Activated CD4-positive, alpha-beta memory T cell treated with anti-CD3 and anti-CD28 coated beads for 36 hours (primary cell): ENCODE measurements at regions of chr18 and their contacts with region 1.

Region 1: DNA sequence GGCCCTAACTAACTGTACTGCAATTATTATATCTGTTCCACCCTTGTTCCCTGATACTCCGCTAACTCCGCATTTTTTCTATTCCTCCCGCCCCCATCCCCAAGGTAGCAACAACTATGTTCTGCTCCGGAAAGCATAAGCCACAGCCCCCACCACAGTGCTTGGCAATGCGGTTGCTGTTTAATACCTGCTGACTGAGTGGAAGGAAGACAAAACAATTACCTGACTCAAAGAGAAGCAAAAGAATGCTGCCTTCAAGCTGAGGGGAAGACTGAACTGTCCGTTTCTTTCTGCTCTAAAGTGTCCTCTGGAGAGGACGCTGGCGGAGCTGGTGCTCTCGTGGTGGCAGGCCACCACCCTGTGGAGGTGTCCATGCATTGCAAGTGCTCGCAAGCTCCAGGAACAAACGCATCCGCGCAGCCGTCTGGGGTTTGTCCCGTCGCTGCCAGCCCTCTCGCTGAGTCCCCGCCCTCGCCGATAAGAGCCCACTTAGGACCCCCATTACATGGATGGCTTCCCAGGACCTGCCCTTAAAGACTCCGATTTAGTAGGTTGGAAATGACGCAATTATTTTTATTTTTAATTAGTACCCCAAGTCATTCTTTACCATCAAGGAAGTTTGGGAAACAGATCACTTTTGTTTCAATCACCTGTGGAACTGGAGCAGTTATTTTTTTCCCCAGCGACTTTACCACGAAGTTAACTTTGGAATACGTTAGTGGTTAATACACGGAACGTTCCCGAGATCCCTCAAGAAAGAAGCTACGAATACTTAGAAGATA is 1.6 kb upstream of the MYL12A start:
- DNase-seq: peak; percentile 91
- H3K4me3 Mint-ChIP-seq: peak overlapping the region; percentile 97
- H3K27ac Mint-ChIP-seq: peak overlapping the region; percentile 98
- H3K4me1 Mint-ChIP-seq: peaks cover 23% of the 10 kb centered on the region
- H3K27me3 Mint-ChIP-seq: no peaks in the 10 kb centered on the region

Region 2: GRCh38 chr18:2641638-2642037 is 604.4 kb before region 1 on chr18:
- CTCF ChIA-PET with region 1: interaction called, 3 read pairs
- POLR2A ChIA-PET with region 1: no interaction called
- intact Hi-C with region 1: loop called (anchors 5 kb)
- DNase-seq: no peak
- H3K4me3 Mint-ChIP-seq: peak overlapping the region; percentile 57
- H3K27ac Mint-ChIP-seq: peak overlapping the region; percentile 58
- H3K4me1 Mint-ChIP-seq: peaks cover 52% of the 10 kb centered on the region
- H3K27me3 Mint-ChIP-seq: no peaks in the 10 kb centered on the region

Region 3: GRCh38 chr18:2932247-2933181 is 313.5 kb before region 1 on chr18:
- CTCF ChIA-PET with region 1: interaction called, 22 read pairs
- POLR2A ChIA-PET with region 1: interaction called, 3 read pairs
- intact Hi-C with region 1: loop called (anchors 1 kb)
- DNase-seq: no peak
- H3K4me3 Mint-ChIP-seq: peak overlapping the region; percentile 18
- H3K27ac Mint-ChIP-seq: peak overlapping the region; percentile 89
- H3K4me1 Mint-ChIP-seq: peaks cover 45% of the 10 kb centered on the region
- H3K27me3 Mint-ChIP-seq: no peaks in the 10 kb centered on the region

Region 4: GRCh38 chr18:3012964-3013804 is 232.9 kb before region 1 on chr18 and contains the start of gene LPIN2:
- CTCF ChIA-PET with region 1: interaction called, 8 read pairs
- POLR2A ChIA-PET with region 1: no interaction called
- intact Hi-C with region 1: loop called (anchors 2 kb)
- DNase-seq: peak; percentile 98
- H3K4me3 Mint-ChIP-seq: peak within 1 kb of the TSS; percentile 98
- H3K27ac Mint-ChIP-seq: peak within 1 kb of the TSS; percentile 96
- H3K4me1 Mint-ChIP-seq: peaks cover 63% of the 10 kb centered on the region
- H3K27me3 Mint-ChIP-seq: no peaks in the 10 kb centered on the region
- total RNA-seq, gene LPIN2: 102 to 107 TPM

Region 5: GRCh38 chr18:3189884-3190283 is 56.2 kb before region 1 on chr18:
- CTCF ChIA-PET with region 1: interaction called, 10 read pairs
- POLR2A ChIA-PET with region 1: no interaction called
- intact Hi-C with region 1: no loop called
- DNase-seq: no peak
- H3K4me3 Mint-ChIP-seq: no peak overlapping the region
- H3K27ac Mint-ChIP-seq: no peak overlapping the region
- H3K4me1 Mint-ChIP-seq: no peaks in the 10 kb centered on the region
- H3K27me3 Mint-ChIP-seq: peaks cover 2% of the 10 kb centered on the region

Region 6: GRCh38 chr18:3305354-3305762 is 59.3 kb after region 1 on chr18:
- CTCF ChIA-PET with region 1: no interaction called
- POLR2A ChIA-PET with region 1: no interaction called
- intact Hi-C with region 1: loop called (anchors 1 kb)
- DNase-seq: peak; percentile 77
- H3K4me3 Mint-ChIP-seq: no peak overlapping the region
- H3K27ac Mint-ChIP-seq: peak overlapping the region; percentile 80
- H3K4me1 Mint-ChIP-seq: peaks cover 21% of the 10 kb centered on the region
- H3K27me3 Mint-ChIP-seq: peaks cover 15% of the 10 kb centered on the region

Region 7: GRCh38 chr18:3541549-3542386 is 295.7 kb after region 1 on chr18:
- CTCF ChIA-PET with region 1: no interaction called
- POLR2A ChIA-PET with region 1: no interaction called
- intact Hi-C with region 1: no loop called
- DNase-seq: peak; percentile 68
- H3K4me3 Mint-ChIP-seq: peak overlapping the region; percentile 8
- H3K27ac Mint-ChIP-seq: peak overlapping the region; percentile 59
- H3K4me1 Mint-ChIP-seq: peaks cover 35% of the 10 kb centered on the region
- H3K27me3 Mint-ChIP-seq: no peaks in the 10 kb centered on the region